Left cardiac atrium (tissue), 4 donors: ENCODE measurements at regions of chr6 and their contacts with region 1.

Region 1: DNA sequence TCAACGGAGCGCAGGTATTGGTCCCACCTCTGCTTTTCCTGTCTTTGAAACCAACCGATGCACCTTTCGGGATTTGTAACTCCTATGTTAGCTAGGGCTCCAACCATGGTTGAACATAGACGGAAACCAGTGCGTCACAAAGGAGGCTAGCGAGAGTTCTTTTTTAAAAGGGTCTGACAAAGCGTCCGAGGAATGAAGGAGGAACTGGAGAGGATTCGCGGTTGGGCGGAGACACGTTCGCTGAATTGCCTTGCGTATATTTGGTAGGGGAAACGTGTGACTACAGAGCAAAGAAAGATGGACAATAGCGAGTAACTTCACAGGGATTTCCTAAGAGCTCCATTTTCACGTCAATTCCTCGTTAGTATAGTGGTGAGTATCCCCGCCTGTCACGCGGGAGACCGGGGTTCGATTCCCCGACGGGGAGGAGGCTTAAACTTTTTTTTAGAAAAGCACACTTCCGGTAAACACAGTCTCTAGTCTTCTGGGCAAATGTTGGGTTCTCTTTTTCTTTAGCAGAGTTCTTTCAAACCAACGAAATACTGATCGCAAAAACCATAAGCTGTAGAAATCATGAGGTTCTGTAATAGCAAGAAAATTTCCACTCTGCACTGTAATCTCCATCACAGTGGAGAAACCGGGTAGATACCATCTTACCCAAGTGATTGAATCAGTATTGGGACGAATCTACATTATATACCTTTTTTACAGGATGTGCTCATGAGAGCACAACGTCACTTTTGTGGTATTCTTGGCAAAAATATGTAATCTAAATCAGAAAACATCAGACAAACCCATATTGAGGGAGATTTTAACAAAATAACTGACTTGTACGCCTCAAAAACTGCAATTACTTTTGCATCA is 6.6 kb upstream of the ZNF184 start:
- DNase-seq: peak; percentile 58
- ATAC-seq: peak; percentile 92 to 96

Region 2: DNA sequence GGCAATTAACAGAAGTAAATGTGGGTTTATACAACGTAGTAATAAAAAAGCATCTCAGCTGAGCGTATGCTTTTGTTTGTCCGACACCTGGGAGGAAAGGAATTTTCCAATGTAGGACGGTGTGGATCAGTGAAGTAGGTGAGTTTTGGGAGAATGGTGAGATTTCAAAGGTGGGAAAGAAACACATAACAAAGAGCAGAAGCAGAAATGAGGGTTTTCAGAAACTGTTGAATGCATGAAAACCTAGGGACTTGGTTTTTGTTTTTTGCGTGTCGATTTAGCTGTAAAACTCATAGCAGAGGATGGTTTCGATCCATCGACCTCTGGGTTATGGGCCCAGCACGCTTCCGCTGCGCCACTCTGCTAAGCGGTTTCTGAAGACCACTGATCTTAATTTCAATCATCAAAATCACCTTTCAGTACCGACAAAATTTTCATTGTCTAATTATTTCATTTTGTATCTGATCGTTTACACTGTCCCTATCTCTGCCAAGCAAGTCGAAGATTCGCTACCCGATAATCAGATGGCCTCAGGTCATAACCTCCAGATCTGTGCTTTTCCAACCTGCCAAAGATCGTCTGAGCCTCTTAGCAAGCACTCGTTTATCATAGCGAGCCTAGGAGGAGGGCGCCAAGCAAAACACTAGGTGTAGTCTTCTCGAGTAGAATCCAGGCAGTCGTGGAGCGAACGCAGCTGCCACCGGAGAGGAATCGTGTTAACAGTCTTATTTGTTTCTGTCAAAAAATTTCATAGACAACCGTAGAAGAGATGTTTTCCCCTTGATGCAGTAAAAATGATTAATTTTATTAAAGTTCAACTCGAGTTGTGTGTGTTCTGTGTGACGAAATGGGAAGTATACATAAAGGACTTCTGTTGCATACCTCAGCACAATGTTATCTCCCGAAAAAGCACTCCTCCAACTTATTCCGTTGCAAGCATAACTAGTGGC is 146.6 kb before region 1 on chr6:
- intact Hi-C with region 1: no loop called
- DNase-seq: no peak
- ATAC-seq: peak in 1 of 2 donors; percentile 70

Region 3: GRCh38 chr6:27503436-27504030 is 24.0 kb after region 1 on chr6:
- intact Hi-C with region 1: loop called in 1 of 2 experiments (anchors 2 kb)
- DNase-seq: peak; percentile 55
- ATAC-seq: peak; percentile 86 to 88